Mammary epithelial cell (primary cell): ENCODE measurements at regions of chr10 and their contacts with region 1.

Region 1: DNA sequence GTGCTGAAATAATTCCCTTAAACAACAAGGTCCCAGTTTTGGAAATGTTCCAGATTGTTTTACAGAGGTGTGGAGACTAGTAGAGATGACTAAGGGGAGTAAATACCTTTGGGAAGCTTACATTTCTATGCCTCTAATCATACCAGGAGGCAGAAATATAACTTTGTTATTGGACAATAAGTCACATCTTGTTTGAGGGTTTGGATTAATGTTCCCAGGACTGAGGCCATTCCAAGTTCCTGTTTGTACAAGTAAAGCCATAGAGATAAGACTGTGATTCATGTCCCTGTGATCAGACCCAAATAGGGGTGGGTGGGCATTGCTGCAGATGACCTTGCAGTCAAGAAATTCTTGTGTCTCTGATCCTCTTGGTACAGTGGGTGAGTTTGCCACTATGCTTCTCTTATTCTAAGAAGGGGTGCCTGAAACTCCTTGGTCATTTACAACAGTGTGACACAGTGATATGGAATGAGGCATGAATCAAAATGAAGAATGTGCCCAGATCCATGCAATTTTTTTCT is 508.3 kb downstream of the SORCS3 start:
- DNase-seq: peak; percentile 80
- H3K4me3 ChIP-seq: no peak overlapping the region
- H3K27ac ChIP-seq: peak overlapping the region; percentile 48
- H3K4me1 ChIP-seq: peaks cover 20% of the 10 kb centered on the region
- H3K27me3 ChIP-seq: no peaks in the 10 kb centered on the region
- CTCF ChIP-seq: no peak

Region 2: GRCh38 chr10:103833731-103834365 is 1315.6 kb before region 1 on chr10:
- CTCF ChIA-PET with region 1: no interaction called
- dilution Hi-C with region 1: no loop called
- in situ Hi-C with region 1: no loop called
- intact Hi-C with region 1: no loop called
- DNase-seq: no peak
- H3K4me3 ChIP-seq: no peak overlapping the region
- H3K27ac ChIP-seq: no peak overlapping the region
- H3K4me1 ChIP-seq: peaks cover 48% of the 10 kb centered on the region
- H3K27me3 ChIP-seq: no peaks in the 10 kb centered on the region
- CTCF ChIP-seq: no peak

Region 3: DNA sequence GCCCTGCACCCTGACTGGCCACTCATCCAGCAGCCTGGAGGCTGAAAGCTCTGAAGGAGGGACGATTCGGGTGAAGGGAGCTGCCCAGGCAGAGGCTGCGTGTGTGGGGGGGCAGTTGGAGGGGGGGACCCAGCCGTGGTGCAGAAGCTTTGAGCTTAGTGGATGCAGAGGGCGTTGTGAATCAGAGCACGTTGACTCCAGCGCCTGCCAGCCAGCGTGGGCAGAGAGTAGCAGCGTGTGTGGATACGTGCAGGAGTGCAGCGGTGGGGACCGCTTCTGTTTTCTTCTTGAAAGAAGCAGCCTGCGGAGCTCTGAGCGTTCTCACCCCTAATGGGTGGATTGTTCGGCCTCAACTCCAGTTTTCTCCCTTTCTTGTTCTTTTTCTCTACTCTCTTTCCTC is 461.2 kb before region 1 on chr10:
- CTCF ChIA-PET with region 1: no interaction called
- dilution Hi-C with region 1: no loop called
- in situ Hi-C with region 1: no loop called
- intact Hi-C with region 1: no loop called
- DNase-seq: no peak
- H3K4me3 ChIP-seq: no peak overlapping the region
- H3K27ac ChIP-seq: no peak overlapping the region
- H3K4me1 ChIP-seq: no peaks in the 10 kb centered on the region
- H3K27me3 ChIP-seq: no peaks in the 10 kb centered on the region
- CTCF ChIP-seq: no peak

Region 4: DNA sequence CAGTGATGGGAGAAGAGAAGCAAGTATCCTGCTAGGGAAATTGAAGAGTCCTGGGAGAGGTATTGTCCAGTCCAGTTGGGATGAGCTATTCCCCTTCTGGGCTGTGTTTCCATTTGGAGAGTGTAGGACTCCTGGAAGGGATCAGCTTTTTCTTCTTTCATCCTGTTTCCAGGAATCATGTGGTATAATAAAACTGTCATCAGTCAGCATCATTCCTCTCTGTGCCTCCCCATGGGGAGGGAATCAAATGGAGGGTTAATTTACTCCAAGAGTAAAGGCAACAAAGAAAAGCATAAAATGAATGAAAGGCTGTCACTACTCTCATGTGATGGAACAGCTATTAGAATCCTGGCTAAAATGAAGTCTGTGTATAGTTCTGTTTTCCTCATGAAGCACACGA is 78.5 kb before region 1 on chr10:
- CTCF ChIA-PET with region 1: no interaction called
- dilution Hi-C with region 1: no loop called
- in situ Hi-C with region 1: no loop called
- intact Hi-C with region 1: loop called (anchors 5 kb)
- DNase-seq: no peak
- H3K4me3 ChIP-seq: no peak overlapping the region
- H3K27ac ChIP-seq: no peak overlapping the region
- H3K4me1 ChIP-seq: peaks cover 19% of the 10 kb centered on the region
- H3K27me3 ChIP-seq: no peaks in the 10 kb centered on the region
- CTCF ChIP-seq: no peak

Region 5: GRCh38 chr10:105096316-105096715 is 53.1 kb before region 1 on chr10:
- CTCF ChIA-PET with region 1: no interaction called
- dilution Hi-C with region 1: no loop called
- in situ Hi-C with region 1: no loop called
- intact Hi-C with region 1: no loop called
- DNase-seq: no peak
- H3K4me3 ChIP-seq: no peak overlapping the region
- H3K27ac ChIP-seq: no peak overlapping the region
- H3K4me1 ChIP-seq: no peaks in the 10 kb centered on the region
- H3K27me3 ChIP-seq: no peaks in the 10 kb centered on the region
- CTCF ChIP-seq: no peak

Region 6: DNA sequence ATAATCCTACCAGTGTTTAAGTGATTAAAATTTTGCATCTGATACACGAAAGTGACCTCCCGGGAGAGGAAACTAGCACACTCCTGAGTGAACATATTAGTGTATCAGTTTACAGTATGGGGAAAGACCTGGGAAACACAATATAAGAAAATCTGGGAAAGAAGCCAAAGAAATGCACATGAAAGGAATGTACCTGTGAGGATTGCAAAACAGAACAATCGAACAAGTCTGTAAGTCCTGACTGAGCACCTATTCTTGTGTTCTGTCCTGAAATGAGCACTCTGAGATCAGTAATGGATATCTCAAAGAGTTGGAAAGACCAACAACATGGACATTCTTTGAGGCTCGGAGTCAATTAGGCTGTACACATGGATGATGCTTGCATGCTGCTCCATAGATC is 46.4 kb after region 1 on chr10:
- CTCF ChIA-PET with region 1: no interaction called
- dilution Hi-C with region 1: no loop called
- in situ Hi-C with region 1: no loop called
- intact Hi-C with region 1: loop called (anchors 5 kb)
- DNase-seq: peak; percentile 86
- H3K4me3 ChIP-seq: no peak overlapping the region
- H3K27ac ChIP-seq: no peak overlapping the region
- H3K4me1 ChIP-seq: peaks cover 9% of the 10 kb centered on the region
- H3K27me3 ChIP-seq: no peaks in the 10 kb centered on the region
- CTCF ChIP-seq: no peak